ENCODE measurements at regions of chr7 and their contacts with region 1.

Region 1: GRCh38 chr7:24869572-24869971 is 110.4 kb downstream of the OSBPL3 start:
- DNase-seq: no peak
- H3K4me3 Mint-ChIP-seq: no peak overlapping the region
- H3K27ac Mint-ChIP-seq: no peak overlapping the region
- H3K4me1 Mint-ChIP-seq: peaks cover 46% of the 10 kb centered on the region
- H3K27me3 Mint-ChIP-seq: no peaks in the 10 kb centered on the region

Region 2: DNA sequence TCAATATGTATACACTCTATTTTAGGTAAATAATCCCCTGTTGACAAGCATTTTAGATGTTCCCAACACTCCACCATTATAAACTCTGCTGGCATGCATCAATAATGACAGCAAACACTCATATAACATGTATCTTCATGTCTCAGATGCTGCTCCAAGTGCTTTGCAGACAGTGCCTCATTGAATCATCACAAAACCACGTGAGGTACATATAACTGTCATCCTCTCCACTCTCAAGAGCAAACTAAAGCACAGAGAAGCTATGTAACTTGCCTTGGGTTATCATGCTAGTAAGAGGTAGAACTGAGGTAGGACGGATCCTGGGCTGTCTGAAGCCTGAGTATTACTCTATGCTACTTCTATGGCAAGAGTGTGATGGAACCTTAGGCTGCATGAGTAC is 39.8 kb before region 1 on chr7:
- intact Hi-C with region 1: loop called (anchors 1 kb)
- DNase-seq: no peak
- H3K4me3 Mint-ChIP-seq: no peak overlapping the region
- H3K27ac Mint-ChIP-seq: no peak overlapping the region
- H3K4me1 Mint-ChIP-seq: peaks cover 77% of the 10 kb centered on the region
- H3K27me3 Mint-ChIP-seq: no peaks in the 10 kb centered on the region

Region 3: DNA sequence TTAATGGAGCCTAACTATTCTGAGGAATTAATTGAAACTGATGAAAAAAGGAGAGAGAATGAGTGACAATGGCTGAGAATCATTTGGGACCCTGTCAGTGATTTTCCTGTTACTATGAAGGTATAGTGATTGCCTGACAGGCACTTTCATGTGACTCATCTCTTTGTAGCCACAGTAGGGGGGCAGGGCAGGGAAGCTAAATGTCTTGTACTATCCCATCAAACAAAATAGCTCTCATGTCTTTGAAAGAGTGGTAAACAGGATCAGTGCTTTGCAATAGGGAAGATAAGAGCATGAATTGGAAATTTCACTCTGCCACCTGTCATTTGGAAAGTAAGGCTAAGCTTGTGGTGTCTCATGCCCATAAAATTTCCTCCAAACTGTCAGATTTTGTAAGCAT is 17.8 kb before region 1 on chr7:
- intact Hi-C with region 1: loop called (anchors 2 kb)
- DNase-seq: no peak
- H3K4me3 Mint-ChIP-seq: no peak overlapping the region
- H3K27ac Mint-ChIP-seq: peak overlapping the region; percentile 48
- H3K4me1 Mint-ChIP-seq: peaks cover 38% of the 10 kb centered on the region
- H3K27me3 Mint-ChIP-seq: no peaks in the 10 kb centered on the region

Region 4: GRCh38 chr7:24882989-24883621 is 13.5 kb after region 1 on chr7:
- intact Hi-C with region 1: loop called (anchors 1 kb)
- DNase-seq: no peak
- H3K4me3 Mint-ChIP-seq: no peak overlapping the region
- H3K27ac Mint-ChIP-seq: peak overlapping the region; percentile 53
- H3K4me1 Mint-ChIP-seq: peaks cover 79% of the 10 kb centered on the region
- H3K27me3 Mint-ChIP-seq: no peaks in the 10 kb centered on the region

Region 5: GRCh38 chr7:24965831-24966709 is 96.5 kb after region 1 on chr7:
- intact Hi-C with region 1: loop called (anchors 1 kb)
- DNase-seq: peak; percentile 60
- H3K4me3 Mint-ChIP-seq: peak overlapping the region; percentile 31
- H3K27ac Mint-ChIP-seq: peak overlapping the region; percentile 80
- H3K4me1 Mint-ChIP-seq: peaks cover 79% of the 10 kb centered on the region
- H3K27me3 Mint-ChIP-seq: no peaks in the 10 kb centered on the region

Region 6: DNA sequence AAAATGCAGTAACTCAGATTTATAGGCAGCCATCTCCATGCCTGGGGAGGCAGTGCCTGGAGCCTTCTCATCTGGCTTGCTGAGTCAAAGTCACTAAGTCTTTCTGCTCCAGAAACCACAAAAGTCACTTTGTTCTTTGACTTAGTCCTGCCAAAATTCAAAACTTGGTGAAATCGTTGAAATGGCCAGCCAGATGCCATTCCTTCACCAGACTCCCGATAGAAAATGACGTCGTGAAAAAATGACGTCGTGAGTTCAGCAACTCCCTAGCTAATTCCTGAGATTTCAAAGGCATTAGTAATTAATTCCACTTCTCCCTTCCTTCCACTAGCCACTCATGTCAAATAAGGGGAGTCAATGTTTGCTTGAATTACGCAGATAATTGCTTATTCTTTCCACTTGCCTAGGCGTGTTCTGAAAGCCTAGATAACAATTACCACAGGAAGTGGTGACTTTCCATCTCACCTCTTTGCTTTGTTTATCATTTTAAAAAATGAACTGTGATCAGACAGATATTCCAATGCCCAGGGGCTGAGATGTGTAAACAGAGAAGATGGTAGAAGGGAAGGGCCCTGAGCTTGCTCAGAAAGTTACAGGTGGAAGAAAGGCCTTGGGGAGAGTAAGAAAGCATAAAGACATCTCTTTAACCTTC is 158.9 kb after region 1 on chr7:
- intact Hi-C with region 1: loop called (anchors 5 kb)
- DNase-seq: peak; percentile 32
- H3K4me3 Mint-ChIP-seq: peak overlapping the region; percentile 32
- H3K27ac Mint-ChIP-seq: peak overlapping the region; percentile 82
- H3K4me1 Mint-ChIP-seq: peaks cover 51% of the 10 kb centered on the region
- H3K27me3 Mint-ChIP-seq: peaks cover 17% of the 10 kb centered on the region

Region 7: DNA sequence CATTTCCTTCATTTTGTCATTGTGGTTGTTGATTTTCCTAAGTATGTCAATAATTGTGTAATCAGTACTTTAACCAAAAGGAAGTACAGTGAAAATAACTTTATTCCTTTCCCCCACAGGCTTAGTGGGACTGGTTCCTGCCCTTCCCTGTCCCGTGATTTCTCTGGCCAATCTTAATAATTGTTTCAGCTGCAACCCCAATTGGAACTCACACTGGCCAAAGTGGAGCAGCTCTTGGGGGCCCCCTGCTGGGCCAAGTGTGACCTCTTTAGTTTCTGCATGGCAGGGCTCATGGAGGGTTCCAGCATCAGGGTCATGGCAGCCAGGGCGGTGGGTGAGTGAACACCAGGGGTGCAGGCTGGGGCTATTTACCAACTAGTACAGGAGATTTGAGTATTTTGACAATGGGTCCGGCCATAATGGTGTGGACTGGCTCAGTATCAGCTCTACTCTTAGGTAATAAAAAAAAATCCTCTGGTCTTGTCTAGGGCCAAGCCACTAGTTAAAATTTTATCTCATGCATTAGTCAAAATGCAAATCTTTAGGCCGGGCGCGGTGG is 223.8 kb after region 1 on chr7:
- intact Hi-C with region 1: loop called (anchors 5 kb)
- DNase-seq: peak; percentile 66
- H3K4me3 Mint-ChIP-seq: no peak overlapping the region
- H3K27ac Mint-ChIP-seq: no peak overlapping the region
- H3K4me1 Mint-ChIP-seq: peaks cover 16% of the 10 kb centered on the region
- H3K27me3 Mint-ChIP-seq: peaks cover 9% of the 10 kb centered on the region